ENCODE measurements at regions of chr4 and their contacts with region 1.

Region 1: DNA sequence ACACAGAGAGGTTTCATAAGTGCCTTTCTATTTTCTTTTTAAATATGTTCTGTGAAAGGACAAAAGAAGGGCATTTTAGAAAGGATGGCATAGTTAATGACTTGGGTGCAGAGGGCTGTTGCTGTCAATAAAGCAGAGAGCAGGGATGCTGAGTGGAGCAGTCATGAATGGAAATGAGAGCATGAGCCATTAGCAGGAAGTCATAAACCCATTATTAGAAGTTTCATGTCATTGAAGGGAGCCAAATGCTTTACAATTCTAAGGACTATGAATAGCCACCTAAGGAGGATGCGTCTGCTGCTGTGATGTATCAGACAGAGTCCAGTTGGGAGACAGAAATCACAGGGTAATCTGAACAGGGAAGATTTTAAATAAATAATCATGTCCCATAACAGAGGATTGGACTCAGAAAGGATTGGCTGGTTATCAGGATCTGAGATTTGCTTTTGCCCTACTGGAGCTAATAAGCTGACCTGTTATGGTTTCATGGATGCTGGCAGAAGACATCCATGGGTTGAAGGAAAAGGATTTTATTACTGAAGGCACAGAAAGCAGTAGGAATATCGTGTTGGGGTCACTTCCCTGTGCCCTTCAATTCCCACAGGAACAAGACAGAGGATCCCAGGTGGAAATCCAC is 47.5 kb upstream of the WDR19 start:
- DNase-seq: peak; percentile 16
- H3K4me3 ChIP-seq: no peak overlapping the region
- H3K27ac ChIP-seq: no peak overlapping the region
- H3K4me1 ChIP-seq: no peaks in the 10 kb centered on the region
- H3K27me3 ChIP-seq: no peaks in the 10 kb centered on the region
- CTCF ChIP-seq: no peak
- POLR2A ChIP-seq: no peak

Region 2: DNA sequence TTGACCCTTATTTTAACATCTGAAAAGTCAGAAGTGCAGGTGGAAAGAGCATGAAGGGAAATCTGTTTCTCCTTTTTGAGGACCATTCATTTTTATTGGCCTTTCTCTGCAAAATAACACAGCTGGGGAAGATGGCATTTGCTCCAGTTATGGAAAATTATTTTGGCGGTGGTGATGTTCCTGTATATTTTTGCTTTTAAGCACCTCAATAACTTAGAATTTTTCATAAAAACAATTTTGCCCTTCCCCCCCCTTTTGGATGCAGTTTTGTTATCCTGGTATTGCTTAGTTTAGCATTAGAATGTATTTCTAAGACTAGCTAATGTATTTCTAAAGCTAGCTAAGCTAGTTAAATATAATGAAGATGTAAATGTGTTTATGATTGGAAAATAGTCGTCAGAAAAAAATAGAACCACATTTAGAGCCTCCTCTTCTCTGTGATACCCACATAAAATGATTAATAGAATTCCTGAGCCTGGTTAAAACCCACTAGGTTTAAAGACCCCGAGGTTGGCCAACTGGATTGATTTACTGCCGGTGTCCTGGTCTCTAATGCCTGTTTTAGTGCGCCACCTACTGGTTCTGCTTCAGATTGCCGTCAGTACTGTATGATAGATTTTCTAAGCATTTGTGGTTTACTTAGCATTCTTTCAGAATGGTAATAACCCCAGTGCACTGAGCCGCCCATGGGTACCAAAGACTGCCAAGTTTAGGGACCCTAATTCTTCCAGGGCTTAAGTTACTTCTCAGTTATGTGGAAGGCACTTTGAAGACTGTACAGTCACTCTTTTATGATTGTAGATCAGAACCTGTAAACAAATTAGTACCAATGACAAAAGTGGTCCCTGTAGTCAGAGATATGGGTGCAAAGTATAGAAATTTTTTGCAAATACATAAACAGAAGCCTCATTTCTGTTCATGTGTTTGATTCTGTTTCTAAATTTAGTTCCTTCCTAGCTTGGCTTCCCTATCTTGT is 459.4 kb before region 1 on chr4:
- CTCF ChIA-PET with region 1: no interaction called
- POLR2A ChIA-PET with region 1: no interaction called
- dilution Hi-C with region 1: no loop called
- intact Hi-C with region 1: no loop called
- DNase-seq: peak; percentile 86
- H3K4me3 ChIP-seq: no peak overlapping the region
- H3K27ac ChIP-seq: no peak overlapping the region
- H3K4me1 ChIP-seq: peaks cover 64% of the 10 kb centered on the region
- H3K27me3 ChIP-seq: no peaks in the 10 kb centered on the region
- CTCF ChIP-seq: peak; percentile 75 to 88
- POLR2A ChIP-seq: no peak

Region 3: DNA sequence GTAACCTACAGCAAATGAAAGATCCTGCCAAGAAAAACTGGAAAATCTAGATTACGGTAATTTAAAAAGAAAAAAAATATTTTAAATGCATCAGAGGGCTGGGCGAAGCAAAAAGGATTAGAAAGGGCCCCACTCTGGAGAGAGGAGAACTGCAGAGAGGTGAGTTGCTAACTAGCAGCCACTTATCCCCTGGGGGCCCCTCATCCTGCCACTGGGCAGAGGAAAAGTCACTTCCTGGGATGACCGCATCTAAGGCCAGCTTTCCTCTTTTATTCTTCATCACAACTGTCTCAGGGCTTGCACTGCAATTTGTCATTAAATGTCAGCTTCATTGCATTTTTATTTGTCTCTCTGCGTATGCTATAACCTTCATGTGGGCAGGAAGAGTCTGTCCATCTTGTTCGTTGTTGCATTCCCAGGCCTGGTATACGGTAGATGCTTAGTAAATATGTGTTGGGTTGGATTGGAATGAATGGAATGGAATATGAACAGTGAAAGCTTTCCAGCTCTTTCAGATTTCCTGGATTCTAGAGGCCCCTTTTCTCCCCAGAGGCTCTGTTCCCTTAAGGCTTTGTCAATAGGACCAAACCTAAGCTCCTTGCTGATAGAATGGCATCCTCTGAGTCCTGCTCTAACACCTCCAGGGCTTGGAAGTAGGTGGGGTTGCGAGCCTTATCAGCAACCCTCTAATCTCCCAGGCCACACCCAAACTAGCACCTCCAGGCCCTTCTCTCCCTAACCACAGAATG is 410.9 kb before region 1 on chr4:
- CTCF ChIA-PET with region 1: no interaction called
- POLR2A ChIA-PET with region 1: no interaction called
- dilution Hi-C with region 1: no loop called
- intact Hi-C with region 1: no loop called
- DNase-seq: no peak
- H3K4me3 ChIP-seq: no peak overlapping the region
- H3K27ac ChIP-seq: no peak overlapping the region
- H3K4me1 ChIP-seq: peaks cover 7% of the 10 kb centered on the region
- H3K27me3 ChIP-seq: no peaks in the 10 kb centered on the region
- CTCF ChIP-seq: no peak
- POLR2A ChIP-seq: no peak

Region 4: DNA sequence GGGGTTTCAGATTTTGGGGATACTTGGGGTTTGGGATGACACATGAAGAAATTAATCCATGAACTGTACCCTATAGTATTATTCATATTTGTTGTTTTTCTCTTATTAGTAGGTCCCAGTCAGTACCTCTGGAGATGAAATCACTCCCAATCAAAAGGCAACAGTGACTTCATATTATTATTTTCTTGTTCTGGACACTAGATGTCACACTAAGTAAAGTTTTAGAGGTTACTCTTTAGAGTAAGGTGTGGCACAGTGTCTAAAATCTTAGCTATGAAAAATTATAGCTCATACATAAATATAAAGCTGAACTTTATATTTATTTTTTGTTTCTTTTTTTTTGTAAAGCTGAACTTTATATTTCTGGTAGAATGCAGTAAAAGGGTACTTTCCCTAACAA is 232.1 kb before region 1 on chr4:
- CTCF ChIA-PET with region 1: interaction called, 87 read pairs
- POLR2A ChIA-PET with region 1: no interaction called
- dilution Hi-C with region 1: no loop called
- intact Hi-C with region 1: loop called (anchors 1 kb)
- DNase-seq: peak; percentile 35
- H3K4me3 ChIP-seq: no peak overlapping the region
- H3K27ac ChIP-seq: no peak overlapping the region
- H3K4me1 ChIP-seq: no peaks in the 10 kb centered on the region
- H3K27me3 ChIP-seq: no peaks in the 10 kb centered on the region
- CTCF ChIP-seq: no peak
- POLR2A ChIP-seq: no peak

Region 5: GRCh38 chr4:38920186-38920585 is 214.6 kb before region 1 on chr4:
- CTCF ChIA-PET with region 1: interaction called, 5 read pairs
- POLR2A ChIA-PET with region 1: no interaction called
- dilution Hi-C with region 1: no loop called
- intact Hi-C with region 1: loop called (anchors 5 kb)
- DNase-seq: no peak
- H3K4me3 ChIP-seq: no peak overlapping the region
- H3K27ac ChIP-seq: no peak overlapping the region
- H3K4me1 ChIP-seq: no peaks in the 10 kb centered on the region
- H3K27me3 ChIP-seq: no peaks in the 10 kb centered on the region
- CTCF ChIP-seq: no peak
- POLR2A ChIP-seq: no peak

Region 6: DNA sequence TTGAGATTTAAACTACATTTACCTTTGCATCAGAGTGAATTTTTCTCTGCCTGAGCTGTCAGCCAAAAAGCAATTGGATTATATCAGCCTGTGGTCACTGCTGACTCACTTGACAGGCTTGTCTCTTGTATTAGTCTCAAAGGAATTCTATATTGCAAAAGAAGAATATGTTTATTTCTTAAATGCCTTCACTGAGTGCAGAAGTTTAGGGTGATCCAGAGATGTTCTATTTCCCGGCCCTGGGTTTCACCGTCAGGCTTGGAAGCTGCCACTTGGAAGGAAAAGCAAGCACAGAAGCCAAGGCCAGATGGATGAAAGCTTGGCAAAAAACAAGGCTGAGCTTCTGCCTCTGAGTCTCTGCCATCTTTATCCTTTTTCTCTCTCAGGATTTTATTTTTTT is 186.2 kb before region 1 on chr4:
- CTCF ChIA-PET with region 1: interaction called, 46 read pairs
- POLR2A ChIA-PET with region 1: no interaction called
- dilution Hi-C with region 1: no loop called
- intact Hi-C with region 1: loop called (anchors 10 kb)
- DNase-seq: no peak
- H3K4me3 ChIP-seq: no peak overlapping the region
- H3K27ac ChIP-seq: no peak overlapping the region
- H3K4me1 ChIP-seq: peaks cover 6% of the 10 kb centered on the region
- H3K27me3 ChIP-seq: peaks cover 0 to 3% of the 10 kb centered on the region in 2 experiments
- CTCF ChIP-seq: no peak
- POLR2A ChIP-seq: no peak